CD14-positive monocyte (primary cell): ENCODE measurements at regions of chr1 and their contacts with region 1.

Region 1: DNA sequence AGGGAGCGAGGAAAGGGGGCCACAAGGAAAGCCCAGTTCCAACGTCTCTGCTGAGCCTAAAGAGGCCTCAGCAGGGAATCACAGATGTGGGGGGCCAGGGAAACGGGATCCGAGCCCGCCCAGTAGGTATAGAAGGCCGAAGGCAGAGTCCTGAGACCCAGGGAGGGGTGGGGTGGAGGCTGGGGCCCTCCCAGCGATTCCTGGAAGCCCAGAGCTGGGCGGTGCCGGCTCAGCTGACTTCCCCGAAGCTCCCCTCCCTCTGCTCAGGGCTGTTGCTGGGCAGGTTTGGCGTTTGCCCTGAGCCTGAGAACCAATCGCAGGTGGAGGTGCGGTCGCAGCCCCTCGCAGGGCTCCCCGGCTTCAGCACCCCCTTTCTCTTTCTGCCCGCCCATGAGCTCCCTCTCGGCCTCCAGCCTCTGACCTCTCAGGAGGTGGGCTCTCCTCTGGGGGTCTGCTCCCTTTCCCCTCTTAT is 12.8 kb downstream of the ADAMTSL4 start:
- DNase-seq: peak; percentile 65 to 73 (median 71)
- H3K4me3 ChIP-seq: peak overlapping the region; percentile 46 to 92 (median 61)
- H3K4me3 Mint-ChIP-seq: peak overlapping the region; percentile 93
- H3K27ac ChIP-seq: peak overlapping the region; percentile 88 to 94
- H3K27ac Mint-ChIP-seq: peak overlapping the region; percentile 96 to 100 (median 98)
- H3K4me1 ChIP-seq: peaks cover 84 to 85% of the 10 kb centered on the region in 2 donors
- H3K4me1 Mint-ChIP-seq: peaks cover 75% of the 10 kb centered on the region
- H3K27me3 ChIP-seq: no peaks in the 10 kb centered on the region
- H3K27me3 Mint-ChIP-seq: peaks cover 0 to 2% (median 0%) of the 10 kb centered on the region in 3 donors
- CTCF ChIP-seq: no peak

Region 2: GRCh38 chr1:150498342-150498741 is 63.7 kb before region 1 on chr1:
- intact Hi-C with region 1: no loop called
- DNase-seq: no peak
- H3K4me3 ChIP-seq: no peak overlapping the region
- H3K4me3 Mint-ChIP-seq: no peak overlapping the region
- H3K27ac ChIP-seq: no peak overlapping the region
- H3K27ac Mint-ChIP-seq: no peak overlapping the region
- H3K4me1 ChIP-seq: no peaks in the 10 kb centered on the region
- H3K4me1 Mint-ChIP-seq: no peaks in the 10 kb centered on the region
- H3K27me3 ChIP-seq: no peaks in the 10 kb centered on the region
- H3K27me3 Mint-ChIP-seq: no peaks in the 10 kb centered on the region
- CTCF ChIP-seq: no peak

Region 3: GRCh38 chr1:150529017-150529416 is 33.0 kb before region 1 on chr1:
- intact Hi-C with region 1: no loop called
- DNase-seq: no peak
- H3K4me3 ChIP-seq: no peak overlapping the region
- H3K4me3 Mint-ChIP-seq: no peak overlapping the region
- H3K27ac ChIP-seq: no peak overlapping the region
- H3K27ac Mint-ChIP-seq: no peak overlapping the region
- H3K4me1 ChIP-seq: no peaks in the 10 kb centered on the region
- H3K4me1 Mint-ChIP-seq: peaks cover 5% of the 10 kb centered on the region
- H3K27me3 ChIP-seq: no peaks in the 10 kb centered on the region
- H3K27me3 Mint-ChIP-seq: peaks cover 0 to 5% (median 2%) of the 10 kb centered on the region in 3 donors
- CTCF ChIP-seq: no peak

Region 4: DNA sequence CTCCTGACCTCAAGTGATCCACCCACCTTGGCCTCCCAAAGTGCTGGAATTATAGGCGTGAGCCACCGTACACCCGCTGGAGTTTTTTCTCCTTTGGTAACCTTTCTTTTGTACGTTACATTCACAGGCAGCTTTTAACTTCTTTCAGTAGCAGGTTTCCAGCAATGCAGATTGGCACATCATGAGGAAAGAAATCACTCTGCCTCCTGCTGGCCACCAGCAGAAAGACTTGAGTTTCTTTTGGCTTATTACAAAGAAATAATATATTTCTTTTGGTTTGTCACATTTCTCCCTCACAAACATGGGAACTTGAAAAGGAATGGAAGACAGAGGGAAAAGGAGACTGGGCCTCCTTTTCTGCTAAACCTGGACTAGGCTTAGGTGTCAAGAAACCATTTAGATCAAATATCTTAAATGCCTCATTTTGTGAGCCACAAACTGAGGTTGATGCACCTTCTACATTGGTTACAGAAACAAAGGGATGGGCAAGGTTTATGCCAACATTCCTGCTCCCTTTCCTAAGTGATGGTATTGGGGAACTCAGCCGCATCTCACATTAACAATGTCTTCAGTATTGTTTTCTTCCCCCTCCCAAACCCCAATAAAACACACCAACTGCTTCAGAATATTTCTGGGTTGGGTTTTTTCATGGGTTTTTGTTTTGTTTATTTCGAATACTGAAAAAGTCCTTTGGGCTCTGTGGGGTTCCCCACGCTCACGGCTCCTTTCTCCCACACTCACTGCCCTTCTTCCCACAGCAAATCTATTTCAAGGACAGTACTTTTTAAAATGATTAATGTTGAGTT is 59.7 kb after region 1 on chr1:
- intact Hi-C with region 1: loop called (anchors 5 kb)
- DNase-seq: peak; percentile 65 to 82 (median 76)
- H3K4me3 ChIP-seq: peak overlapping the region in 1 of 3 experiments; percentile 37
- H3K4me3 Mint-ChIP-seq: peak overlapping the region in 1 of 2 donors; percentile 71
- H3K27ac ChIP-seq: peak overlapping the region in 1 of 2 donors; percentile 23
- H3K27ac Mint-ChIP-seq: peak overlapping the region; percentile 84 to 92 (median 85)
- H3K4me1 ChIP-seq: peaks cover 25 to 45% of the 10 kb centered on the region in 2 donors
- H3K4me1 Mint-ChIP-seq: peaks cover 43% of the 10 kb centered on the region
- H3K27me3 ChIP-seq: no peaks in the 10 kb centered on the region
- H3K27me3 Mint-ChIP-seq: no peaks in the 10 kb centered on the region
- CTCF ChIP-seq: peak; percentile 85

Region 5: DNA sequence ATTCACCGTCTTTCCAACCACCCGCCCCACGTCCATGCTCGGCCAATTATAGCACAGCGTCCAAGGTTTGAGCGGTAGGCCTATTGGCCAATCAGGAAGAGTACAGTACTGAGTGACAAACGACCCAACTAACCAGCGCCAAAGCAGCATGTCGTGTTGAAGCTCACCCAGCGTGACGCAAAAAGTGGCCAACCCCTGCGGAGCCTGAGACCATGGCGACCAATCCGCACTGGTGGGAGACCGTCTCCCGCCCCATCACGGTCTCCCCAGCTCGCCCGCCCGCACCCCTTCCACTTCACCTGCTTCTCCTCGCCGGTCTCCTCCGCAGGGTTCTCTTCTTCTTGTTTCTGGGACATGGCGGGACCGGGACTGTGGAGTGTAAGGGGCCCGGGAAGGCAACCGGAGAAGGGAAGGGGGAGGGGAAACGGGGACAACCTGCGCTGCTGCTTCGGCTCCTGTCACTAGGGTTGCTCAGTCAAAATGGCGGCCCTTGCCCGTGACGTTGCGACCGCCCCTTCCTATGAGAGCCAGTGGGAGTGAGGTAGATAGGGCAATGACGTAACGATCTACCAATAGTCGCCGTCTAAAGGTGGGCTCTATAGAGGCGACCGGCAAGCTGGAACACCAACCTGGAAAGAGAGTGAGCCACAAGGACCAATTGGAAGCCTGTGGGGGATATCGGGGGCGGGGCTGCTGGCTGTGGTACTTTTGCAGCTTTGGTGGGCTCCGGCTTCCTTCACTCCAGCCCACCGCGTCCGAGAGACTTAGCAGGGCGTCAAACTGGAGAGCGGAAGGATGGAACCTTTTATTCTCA is 67.3 kb after region 1 on chr1 and contains the start of gene ENSA:
- intact Hi-C with region 1: loop called (anchors 5 kb)
- DNase-seq: peak; percentile 98 to 99 (median 99)
- H3K4me3 ChIP-seq: peak within 1 kb of the TSS; percentile 69 to 88 (median 72)
- H3K4me3 Mint-ChIP-seq: no peak within 1 kb of the TSS
- H3K27ac ChIP-seq: peak within 1 kb of the TSS; percentile 94 to 98
- H3K27ac Mint-ChIP-seq: no peak within 1 kb of the TSS
- H3K4me1 ChIP-seq: peaks cover 18 to 21% of the 10 kb centered on the region in 2 donors
- H3K4me1 Mint-ChIP-seq: peaks cover 6% of the 10 kb centered on the region
- H3K27me3 ChIP-seq: no peaks in the 10 kb centered on the region
- H3K27me3 Mint-ChIP-seq: no peaks in the 10 kb centered on the region
- CTCF ChIP-seq: no peak
- polyA plus RNA-seq, gene ENSA: 30.6 to 40.3 (median 38.5) TPM

Region 6: DNA sequence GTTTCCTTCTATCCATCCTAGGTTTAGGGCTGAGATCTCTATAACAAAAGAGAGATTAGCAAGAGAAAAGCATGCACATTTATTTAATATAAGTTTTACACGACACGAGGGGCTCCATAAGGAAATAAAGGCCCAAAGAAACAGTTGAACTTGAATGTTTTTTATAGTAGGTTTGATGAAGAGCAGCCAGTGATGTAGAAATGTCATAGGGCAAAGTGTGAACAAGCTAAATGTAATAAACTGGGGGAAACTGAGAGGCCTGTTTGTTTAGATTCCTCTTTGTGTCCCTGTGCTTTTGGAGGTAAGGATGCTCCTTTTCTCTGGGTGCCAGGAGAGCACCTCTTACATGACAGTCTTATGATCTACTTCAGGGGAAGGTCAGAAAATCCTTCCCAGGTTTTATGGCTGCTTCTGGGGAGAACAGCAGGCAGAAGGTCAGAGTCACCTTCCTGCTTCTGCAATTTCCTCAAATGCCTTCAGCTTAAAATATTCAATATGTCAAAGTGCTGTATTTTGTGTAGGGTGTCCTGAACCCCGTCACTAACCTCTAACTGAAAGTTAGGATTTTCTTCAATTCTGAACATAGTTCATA is 168.2 kb after region 1 on chr1:
- intact Hi-C with region 1: no loop called
- DNase-seq: no peak
- H3K4me3 ChIP-seq: no peak overlapping the region
- H3K4me3 Mint-ChIP-seq: no peak overlapping the region
- H3K27ac ChIP-seq: peak overlapping the region in 1 of 2 donors; percentile 11
- H3K27ac Mint-ChIP-seq: peak overlapping the region in 2 of 7 donors; percentile 82
- H3K4me1 ChIP-seq: no peaks in the 10 kb centered on the region
- H3K4me1 Mint-ChIP-seq: no peaks in the 10 kb centered on the region
- H3K27me3 ChIP-seq: no peaks in the 10 kb centered on the region
- H3K27me3 Mint-ChIP-seq: no peaks in the 10 kb centered on the region
- CTCF ChIP-seq: no peak